ENCODE measurements at regions of chr4 and their contacts with region 1.

Region 1: GRCh38 chr4:186587416-186588018 is 32.1 kb upstream of the MTNR1A start:
- DNase-seq: no peak
- ATAC-seq: no peak

Region 2: GRCh38 chr4:186067757-186068385 is 519.6 kb before region 1 on chr4:
- intact Hi-C with region 1: loop called (anchors 10 kb)
- DNase-seq: no peak
- ATAC-seq: peak; percentile 91

Region 3: GRCh38 chr4:186297013-186297645 is 290.4 kb before region 1 on chr4:
- intact Hi-C with region 1: loop called (anchors 2 kb)
- DNase-seq: no peak
- ATAC-seq: no peak

Region 4: GRCh38 chr4:186472948-186473347 is 114.6 kb before region 1 on chr4:
- intact Hi-C with region 1: loop called (anchors 5 kb)
- DNase-seq: no peak
- ATAC-seq: no peak

Measured in Right ventricle myocardium inferior (tissue), 1 donor.